HCT116 (cell line): ENCODE measurements at regions of chr6 and their contacts with region 1.

Region 1: GRCh38 chr6:54878674-54879073 is 32.1 kb downstream of the FAM83B start:
- DNase-seq: no peak
- ATAC-seq: peak; percentile 62
- H3K4me3 ChIP-seq: no peak overlapping the region
- H3K27ac ChIP-seq: peak overlapping the region; percentile 17
- H3K4me1 ChIP-seq: peaks cover 50 to 90% of the 10 kb centered on the region in 2 experiments
- H3K27me3 ChIP-seq: no peaks in the 10 kb centered on the region
- CTCF ChIP-seq: peak; percentile 28 to 63 (median 60); a peak in 4 of 6 replicates
- POLR2A ChIP-seq: no peak
- RAD21 ChIP-seq: peak; percentile 75

Region 2: DNA sequence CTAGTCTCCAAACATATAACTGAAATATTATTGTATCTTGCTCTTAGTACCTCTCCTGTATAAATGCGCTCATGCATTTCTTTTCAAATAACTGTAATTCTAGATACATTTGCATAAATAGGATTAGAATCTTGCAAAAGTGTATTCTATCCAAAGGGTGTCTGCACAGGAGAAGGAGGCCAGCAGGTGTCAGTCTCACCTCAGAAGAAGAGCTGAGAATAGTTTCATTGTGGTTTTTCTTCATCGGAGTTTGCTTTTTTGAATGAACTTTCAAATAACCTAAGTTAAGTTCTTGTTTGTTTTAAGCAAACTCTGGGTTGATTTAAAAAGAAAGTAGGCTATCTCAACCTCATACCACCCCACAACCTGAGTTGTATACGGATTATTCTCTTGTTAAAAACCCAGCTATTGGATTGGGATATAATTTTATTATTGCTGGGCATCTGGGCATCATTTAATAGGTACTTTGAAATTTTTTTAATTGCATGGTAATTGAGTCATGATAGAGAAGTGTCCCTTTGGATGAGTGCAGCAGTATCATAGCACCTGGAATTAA is 892.4 kb before region 1 on chr6:
- CTCF ChIA-PET with region 1: no interaction called
- POLR2A ChIA-PET with region 1: interaction called, 3 read pairs
- RAD21 ChIA-PET with region 1: no interaction called
- intact Hi-C with region 1: loop called (anchors 5 kb)
- DNase-seq: peak; percentile 34
- ATAC-seq: peak; percentile 59
- H3K4me3 ChIP-seq: no peak overlapping the region
- H3K27ac ChIP-seq: no peak overlapping the region
- H3K4me1 ChIP-seq: peaks cover 8 to 36% of the 10 kb centered on the region in 2 experiments
- H3K27me3 ChIP-seq: no peaks in the 10 kb centered on the region
- CTCF ChIP-seq: peak; percentile 71 to 96 (median 77)
- POLR2A ChIP-seq: no peak
- RAD21 ChIP-seq: peak; percentile 93

Region 3: GRCh38 chr6:54801669-54802068 is 77.0 kb before region 1 on chr6:
- CTCF ChIA-PET with region 1: no interaction called
- POLR2A ChIA-PET with region 1: no interaction called
- RAD21 ChIA-PET with region 1: no interaction called
- intact Hi-C with region 1: loop called (anchors 10 kb)
- DNase-seq: peak; percentile 83
- ATAC-seq: peak; percentile 86
- H3K4me3 ChIP-seq: peak overlapping the region; percentile 7 to 18; a peak in 2 of 4 replicates
- H3K27ac ChIP-seq: no peak overlapping the region
- H3K4me1 ChIP-seq: peaks cover 11 to 22% of the 10 kb centered on the region in 2 experiments; a peak in 3 of 4 replicates
- H3K27me3 ChIP-seq: no peaks in the 10 kb centered on the region
- CTCF ChIP-seq: no peak
- POLR2A ChIP-seq: no peak
- RAD21 ChIP-seq: no peak

Region 4: DNA sequence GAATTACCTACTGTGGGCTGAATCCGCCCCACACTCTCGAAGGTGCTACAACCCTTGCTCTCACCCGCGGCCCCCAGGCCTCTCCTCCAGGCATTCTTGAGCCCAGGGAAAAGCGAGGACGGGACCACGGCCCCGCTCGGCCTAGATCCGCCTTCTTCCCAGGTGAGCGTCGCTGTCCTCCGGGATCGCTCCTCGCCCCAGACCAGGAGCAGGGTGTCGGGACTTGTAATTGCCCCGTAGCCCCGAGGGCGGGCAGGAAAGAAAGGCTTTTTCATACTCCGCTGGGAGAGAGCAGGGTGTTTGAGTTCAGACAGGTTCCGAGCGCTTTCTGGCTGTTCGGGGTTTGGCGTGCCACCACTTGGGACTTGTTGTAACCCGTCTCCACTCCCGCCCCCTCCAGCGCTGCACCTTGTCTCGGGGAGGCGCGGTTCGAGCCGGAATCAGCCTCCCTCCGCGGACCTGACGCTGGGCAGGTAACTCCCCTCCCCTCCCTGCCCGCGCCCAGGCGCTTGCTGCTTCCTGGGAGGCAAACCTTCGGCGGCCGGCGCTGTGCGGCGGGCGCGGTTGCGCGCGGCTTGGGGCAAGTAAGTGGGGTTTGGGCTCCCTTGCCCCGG is 32.3 kb before region 1 on chr6 and contains the start of gene FAM83B:
- CTCF ChIA-PET with region 1: no interaction called
- POLR2A ChIA-PET with region 1: no interaction called
- RAD21 ChIA-PET with region 1: no interaction called
- intact Hi-C with region 1: loop called (anchors 2 kb)
- DNase-seq: peak; percentile 61
- ATAC-seq: peak; percentile 89
- H3K4me3 ChIP-seq: peak within 1 kb of the TSS; percentile 77 to 89
- H3K27ac ChIP-seq: peak within 1 kb of the TSS; percentile 79
- H3K4me1 ChIP-seq: peaks cover 6 to 29% of the 10 kb centered on the region in 2 experiments; a peak in 3 of 4 replicates
- H3K27me3 ChIP-seq: no peaks in the 10 kb centered on the region
- CTCF ChIP-seq: no peak
- POLR2A ChIP-seq: peak; percentile 60
- RAD21 ChIP-seq: 0 out of 2 replicates have a peak, but pooled peaks have one; percentile 8
- total RNA-seq, gene FAM83B: 16.9 TPM

Region 5: DNA sequence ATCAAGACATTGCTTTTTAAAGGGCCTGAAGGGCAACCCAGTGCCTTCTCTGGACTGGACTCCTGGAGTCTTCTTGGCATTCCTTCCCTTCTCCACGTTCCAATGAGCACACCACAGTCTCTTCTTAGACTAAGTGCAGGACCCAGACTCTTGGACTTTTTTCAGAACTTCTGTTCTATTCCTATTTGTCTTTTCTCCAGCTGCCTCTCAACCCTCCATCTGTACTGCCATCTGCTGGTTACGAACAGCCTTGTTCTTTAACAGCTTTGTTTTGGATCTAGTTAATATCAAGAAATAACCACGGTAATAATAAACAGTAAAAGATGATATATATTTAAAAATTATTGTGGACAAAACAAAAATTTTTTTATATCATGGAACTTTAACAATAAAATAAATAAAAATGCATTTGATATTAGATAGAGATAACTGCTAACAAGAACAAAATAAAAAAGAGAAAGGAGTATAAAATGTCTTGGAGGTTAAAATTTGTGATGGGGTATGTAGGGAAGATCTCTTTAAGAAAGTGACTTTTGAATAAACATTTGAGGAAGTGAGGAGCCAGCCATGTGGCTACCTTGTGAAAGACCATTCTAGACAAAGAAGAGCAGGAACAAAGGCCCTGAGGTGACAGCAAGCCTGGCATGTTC is 190.6 kb after region 1 on chr6:
- CTCF ChIA-PET with region 1: interaction called, 10 read pairs
- POLR2A ChIA-PET with region 1: no interaction called
- RAD21 ChIA-PET with region 1: interaction called in 1 of 2 experiments, 6 read pairs
- intact Hi-C with region 1: loop called (anchors 1 kb)
- DNase-seq: peak; percentile 49
- ATAC-seq: peak; percentile 79
- H3K4me3 ChIP-seq: no peak overlapping the region
- H3K27ac ChIP-seq: no peak overlapping the region
- H3K4me1 ChIP-seq: no peaks in the 10 kb centered on the region
- H3K27me3 ChIP-seq: no peaks in the 10 kb centered on the region
- CTCF ChIP-seq: peak; percentile 65 to 82 (median 71)
- POLR2A ChIP-seq: no peak
- RAD21 ChIP-seq: peak; percentile 93

Region 6: DNA sequence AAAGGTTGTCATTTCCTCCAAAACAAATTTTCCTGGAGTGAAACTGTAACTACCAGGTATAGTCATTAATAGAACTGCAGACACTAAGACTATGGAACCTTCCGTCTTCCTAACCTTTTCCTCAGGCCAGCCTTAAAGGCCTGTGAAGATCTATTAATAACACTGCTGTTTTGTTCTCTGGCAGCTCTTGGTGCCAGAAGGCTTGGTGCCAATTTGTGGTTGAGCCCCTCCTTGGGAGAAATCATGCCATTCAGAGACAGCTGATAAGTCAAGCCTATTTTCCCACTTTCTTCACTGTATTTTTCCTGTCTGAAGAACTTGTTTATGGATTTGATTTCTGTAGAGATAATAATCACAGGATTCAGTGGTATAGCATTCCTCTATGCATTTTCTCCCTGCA is 360.4 kb after region 1 on chr6:
- CTCF ChIA-PET with region 1: no interaction called
- POLR2A ChIA-PET with region 1: no interaction called
- RAD21 ChIA-PET with region 1: no interaction called
- intact Hi-C with region 1: loop called (anchors 1 kb)
- DNase-seq: no peak
- ATAC-seq: no peak
- H3K4me3 ChIP-seq: no peak overlapping the region
- H3K27ac ChIP-seq: no peak overlapping the region
- H3K4me1 ChIP-seq: no peaks in the 10 kb centered on the region
- H3K27me3 ChIP-seq: no peaks in the 10 kb centered on the region
- CTCF ChIP-seq: no peak
- POLR2A ChIP-seq: no peak
- RAD21 ChIP-seq: no peak